ENCODE measurements at regions of chr22 and their contacts with region 1.

Region 1: GRCh38 chr22:42814215-42814614 is 42.9 kb downstream of the ARFGAP3 start:
- DNase-seq: no peak
- ATAC-seq: no peak
- H3K4me3 ChIP-seq: no peak overlapping the region
- H3K27ac ChIP-seq: no peak overlapping the region
- H3K4me1 ChIP-seq: peaks cover 0 to 12% (median 4%) of the 10 kb centered on the region in 12 donors
- H3K27me3 ChIP-seq: no peaks in the 10 kb centered on the region
- CTCF ChIP-seq: no peak
- POLR2A ChIP-seq: no peak

Region 2: GRCh38 chr22:42621505-42622002 is 192.7 kb before region 1 on chr22:
- intact Hi-C with region 1: loop called in 1 of 10 experiments (anchors 10 kb)
- DNase-seq: peak; percentile 64 to 85 (median 73)
- ATAC-seq: peak; percentile 38 to 68 (median 60)
- H3K4me3 ChIP-seq: no peak overlapping the region
- H3K27ac ChIP-seq: peak overlapping the region in 6 of 12 donors; percentile 32 to 67 (median 54)
- H3K4me1 ChIP-seq: peaks cover 0 to 43% (median 20%) of the 10 kb centered on the region in 12 donors
- H3K27me3 ChIP-seq: no peaks in the 10 kb centered on the region
- CTCF ChIP-seq: peak; percentile 85 to 94 (median 91)
- POLR2A ChIP-seq: no peak

Region 3: GRCh38 chr22:42662114-42663021 is 151.8 kb before region 1 on chr22:
- intact Hi-C with region 1: loop called in 5 of 10 experiments (anchors 2 to 10 kb)
- DNase-seq: peak; percentile 81 to 92 (median 84)
- ATAC-seq: peak; percentile 60 to 95 (median 92)
- H3K4me3 ChIP-seq: peak overlapping the region; percentile 26 to 75 (median 57)
- H3K27ac ChIP-seq: peak overlapping the region in 11 of 12 donors; percentile 22 to 76 (median 58)
- H3K4me1 ChIP-seq: peaks cover 0 to 16% (median 11%) of the 10 kb centered on the region in 12 donors
- H3K27me3 ChIP-seq: peaks cover 0 to 9% (median 0%) of the 10 kb centered on the region in 9 donors
- CTCF ChIP-seq: peak in 11 of 12 donors; percentile 77 to 93 (median 84)
- POLR2A ChIP-seq: no peak

Measured in heart left ventricle (tissue), 16 donors.